PC-9 (cell line): ENCODE measurements at regions of chr4 and their contacts with region 1.

Region 1: DNA sequence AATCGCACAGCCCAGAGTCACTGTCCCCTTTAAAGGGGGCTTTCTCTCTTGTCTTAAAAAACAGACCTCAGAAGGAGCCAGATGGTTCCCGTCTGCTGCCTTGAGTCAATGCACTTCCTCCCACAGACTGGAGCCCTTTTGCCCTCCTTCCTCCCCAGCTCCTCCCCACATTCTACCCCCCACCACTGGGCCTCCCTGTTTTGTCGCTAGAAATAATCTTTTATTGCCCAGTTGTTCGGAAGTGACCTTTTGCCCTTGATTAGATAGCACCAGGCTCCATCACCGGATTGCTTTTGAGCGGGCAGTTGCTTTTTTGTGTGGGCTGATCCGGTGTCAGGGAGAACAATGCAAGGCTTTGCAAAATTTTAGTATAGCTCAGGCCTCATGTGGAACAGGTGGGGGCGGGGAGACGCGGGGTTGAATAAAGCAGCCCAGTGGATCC is 47.7 kb downstream of the SPRY1 start:
- DNase-seq: no peak
- H3K4me3 ChIP-seq: no peak overlapping the region
- H3K27ac ChIP-seq: no peak overlapping the region
- H3K4me1 ChIP-seq: peaks cover 6% of the 10 kb centered on the region; the same call in 1 of the 2 replicates
- H3K27me3 ChIP-seq: no peaks in the 10 kb centered on the region
- CTCF ChIP-seq: no peak

Region 2: DNA sequence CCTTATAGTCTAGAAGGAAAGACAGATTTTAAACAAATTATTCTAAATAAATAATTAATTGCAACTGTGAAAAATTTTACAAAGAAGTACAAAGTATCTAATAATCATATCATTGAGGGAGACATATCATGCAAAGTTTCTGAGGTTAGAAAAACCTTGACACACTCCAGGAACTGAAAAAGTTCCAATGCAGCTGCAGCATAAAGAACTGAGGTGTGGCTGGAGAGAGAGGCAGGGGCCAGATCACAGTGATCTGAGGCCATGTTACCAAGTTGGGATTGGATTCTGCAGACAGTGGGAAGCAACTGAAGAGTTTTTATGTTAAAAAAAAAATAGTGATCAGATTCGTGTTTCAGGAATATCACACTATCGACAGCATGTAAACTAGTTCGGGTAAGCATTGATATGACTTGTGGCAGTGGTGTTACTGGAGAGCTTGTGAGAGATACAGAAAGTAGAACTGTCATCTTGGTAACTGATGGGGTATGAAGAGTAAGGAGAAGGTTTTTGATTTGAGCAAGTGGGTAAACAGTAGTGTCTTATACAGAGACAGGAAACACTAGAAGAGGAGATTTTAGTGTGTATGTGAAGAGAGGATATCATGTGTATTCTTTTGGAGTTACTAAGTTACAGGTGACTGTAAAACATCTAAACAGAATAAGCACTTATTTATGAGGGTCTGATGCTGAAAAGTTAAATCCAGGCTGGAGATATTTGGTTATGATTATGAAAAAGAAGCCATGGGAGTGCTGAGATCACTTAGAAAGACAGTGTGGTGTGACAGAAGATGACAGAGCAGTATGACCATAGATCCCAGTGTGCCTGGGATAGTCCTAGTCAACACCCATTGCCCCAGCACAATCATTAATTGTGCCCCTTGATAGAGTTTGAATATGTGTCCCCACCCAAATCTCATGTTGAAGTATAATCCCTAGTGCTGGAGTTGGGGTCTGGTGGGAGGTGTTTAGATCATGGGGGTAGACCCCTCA is 63.3 kb before region 1 on chr4:
- CTCF ChIA-PET with region 1: no interaction called
- POLR2A ChIA-PET with region 1: no interaction called
- intact Hi-C with region 1: no loop called
- DNase-seq: no peak
- H3K4me3 ChIP-seq: no peak overlapping the region
- H3K27ac ChIP-seq: no peak overlapping the region
- H3K4me1 ChIP-seq: no peaks in the 10 kb centered on the region; the same call in 1 of the 2 replicates
- H3K27me3 ChIP-seq: no peaks in the 10 kb centered on the region
- CTCF ChIP-seq: no peak

Region 3: GRCh38 chr4:123430501-123430900 is 13.8 kb before region 1 on chr4:
- CTCF ChIA-PET with region 1: no interaction called
- POLR2A ChIA-PET with region 1: interaction called, 14 read pairs
- intact Hi-C with region 1: no loop called
- DNase-seq: no peak
- H3K4me3 ChIP-seq: no peak overlapping the region
- H3K27ac ChIP-seq: no peak overlapping the region
- H3K4me1 ChIP-seq: no peaks in the 10 kb centered on the region
- H3K27me3 ChIP-seq: no peaks in the 10 kb centered on the region
- CTCF ChIP-seq: no peak